MCF 10A (cell line): ENCODE measurements at regions of chr3 and their contacts with region 1.

Region 1: GRCh38 chr3:189355481-189356201 is 183.9 kb downstream of the TPRG1 start:
- DNase-seq: peak; percentile 93
- H3K4me3 Mint-ChIP-seq: no peak overlapping the region
- H3K27ac Mint-ChIP-seq: peak overlapping the region; percentile 96
- H3K4me1 Mint-ChIP-seq: peaks cover 36% of the 10 kb centered on the region
- H3K27me3 Mint-ChIP-seq: no peaks in the 10 kb centered on the region
- CTCF ChIP-seq: no peak

Region 2: GRCh38 chr3:189298469-189299375 is 56.9 kb before region 1 on chr3:
- CTCF ChIA-PET with region 1: interaction called, 3 read pairs
- POLR2A ChIA-PET with region 1: interaction called, 267 read pairs
- intact Hi-C with region 1: no loop called
- DNase-seq: peak; percentile 87
- H3K4me3 Mint-ChIP-seq: no peak overlapping the region
- H3K27ac Mint-ChIP-seq: peak overlapping the region; percentile 64
- H3K4me1 Mint-ChIP-seq: peaks cover 45% of the 10 kb centered on the region
- H3K27me3 Mint-ChIP-seq: no peaks in the 10 kb centered on the region
- CTCF ChIP-seq: no peak

Region 3: GRCh38 chr3:189334064-189334920 is 21.3 kb before region 1 on chr3:
- CTCF ChIA-PET with region 1: interaction called, 4 read pairs
- POLR2A ChIA-PET with region 1: interaction called, 12 read pairs
- intact Hi-C with region 1: no loop called
- DNase-seq: peak; percentile 13
- H3K4me3 Mint-ChIP-seq: no peak overlapping the region
- H3K27ac Mint-ChIP-seq: no peak overlapping the region
- H3K4me1 Mint-ChIP-seq: peaks cover 4% of the 10 kb centered on the region
- H3K27me3 Mint-ChIP-seq: no peaks in the 10 kb centered on the region
- CTCF ChIP-seq: no peak

Region 4: GRCh38 chr3:189404797-189405484 is 49.3 kb after region 1 on chr3:
- CTCF ChIA-PET with region 1: no interaction called
- POLR2A ChIA-PET with region 1: no interaction called
- intact Hi-C with region 1: no loop called
- DNase-seq: no peak
- H3K4me3 Mint-ChIP-seq: no peak overlapping the region
- H3K27ac Mint-ChIP-seq: no peak overlapping the region
- H3K4me1 Mint-ChIP-seq: no peaks in the 10 kb centered on the region
- H3K27me3 Mint-ChIP-seq: no peaks in the 10 kb centered on the region
- CTCF ChIP-seq: no peak

Region 5: GRCh38 chr3:189488241-189488767 is 132.7 kb after region 1 on chr3:
- CTCF ChIA-PET with region 1: no interaction called
- POLR2A ChIA-PET with region 1: interaction called, 45 read pairs
- intact Hi-C with region 1: no loop called
- DNase-seq: peak; percentile 97
- H3K4me3 Mint-ChIP-seq: peak overlapping the region; percentile 38
- H3K27ac Mint-ChIP-seq: peak overlapping the region; percentile 80
- H3K4me1 Mint-ChIP-seq: peaks cover 34% of the 10 kb centered on the region
- H3K27me3 Mint-ChIP-seq: no peaks in the 10 kb centered on the region
- CTCF ChIP-seq: no peak

Region 6: DNA sequence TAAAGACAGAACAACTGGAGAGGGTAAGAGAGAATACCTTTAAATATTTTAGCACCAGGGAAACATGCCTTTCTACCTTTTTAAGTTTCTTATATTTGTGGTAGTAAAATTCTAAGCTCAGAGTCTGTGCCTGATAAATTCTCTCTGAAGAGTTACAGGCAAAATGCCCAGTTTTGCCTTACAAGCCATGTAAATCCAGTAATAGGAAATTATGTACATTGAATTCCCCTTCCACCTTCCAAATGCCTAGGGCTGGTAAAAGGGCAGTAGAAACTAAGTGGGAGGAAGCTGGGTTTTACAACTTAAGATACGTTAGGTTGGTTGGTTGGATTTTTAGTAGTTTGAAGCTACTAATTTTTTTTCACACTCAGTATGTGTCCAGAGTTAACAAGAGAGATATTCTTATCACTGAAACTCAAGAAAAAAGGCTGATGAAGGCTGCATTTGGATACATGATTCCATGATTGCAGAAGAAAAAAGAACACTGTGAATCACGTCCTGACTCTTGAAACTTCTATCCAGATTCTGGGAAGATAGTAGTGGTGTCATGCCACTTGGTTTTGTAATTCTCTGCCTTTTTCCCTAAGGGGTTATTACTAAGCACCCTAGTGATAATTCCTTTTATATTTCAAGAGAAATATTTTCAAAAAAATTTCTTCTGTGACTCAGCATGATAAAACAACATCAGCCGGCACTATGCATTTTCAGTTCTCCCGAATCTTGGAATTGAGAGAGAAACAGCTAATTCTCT is 232.6 kb after region 1 on chr3:
- CTCF ChIA-PET with region 1: interaction called, 5 read pairs
- POLR2A ChIA-PET with region 1: interaction called, 17 read pairs
- intact Hi-C with region 1: loop called (anchors 10 kb)
- DNase-seq: peak; percentile 92
- H3K4me3 Mint-ChIP-seq: peak overlapping the region; percentile 60
- H3K27ac Mint-ChIP-seq: peak overlapping the region; percentile 84
- H3K4me1 Mint-ChIP-seq: peaks cover 48% of the 10 kb centered on the region
- H3K27me3 Mint-ChIP-seq: no peaks in the 10 kb centered on the region
- CTCF ChIP-seq: no peak